ENCODE measurements at regions of chr12 and their contacts with region 1.

Region 1: GRCh38 chr12:53441040-53441833 is at the start of gene PRR13:
- DNase-seq: peak; percentile 97

Region 2: GRCh38 chr12:53427905-53428594 is 13.2 kb before region 1 on chr12:
- CTCF ChIA-PET with region 1: no interaction called
- POLR2A ChIA-PET with region 1: interaction called, 19 read pairs
- DNase-seq: no peak

Region 3: DNA sequence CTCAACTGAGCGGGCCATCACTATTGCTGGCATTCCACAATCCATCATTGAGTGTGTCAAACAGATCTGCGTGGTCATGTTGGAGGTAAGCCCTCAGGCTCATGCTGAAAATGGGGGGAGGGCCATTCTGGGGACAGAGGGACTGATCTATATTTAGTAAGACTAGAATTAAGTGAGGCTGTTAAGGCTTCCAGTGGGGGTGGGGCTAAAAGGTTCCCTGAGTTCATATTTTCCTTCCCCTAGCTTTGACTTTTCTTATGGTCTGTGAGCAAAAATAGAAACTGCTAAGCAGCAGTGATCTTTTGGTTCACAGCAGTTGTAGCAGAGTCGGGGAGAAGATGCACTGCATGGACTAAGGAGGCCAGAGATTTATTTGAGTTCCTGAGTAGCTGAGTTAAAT is 19.8 kb after region 1 on chr12:
- CTCF ChIA-PET with region 1: no interaction called
- POLR2A ChIA-PET with region 1: no interaction called
- DNase-seq: no peak